ENCODE measurements at regions of chr14 and their contacts with region 1.

Region 1: DNA sequence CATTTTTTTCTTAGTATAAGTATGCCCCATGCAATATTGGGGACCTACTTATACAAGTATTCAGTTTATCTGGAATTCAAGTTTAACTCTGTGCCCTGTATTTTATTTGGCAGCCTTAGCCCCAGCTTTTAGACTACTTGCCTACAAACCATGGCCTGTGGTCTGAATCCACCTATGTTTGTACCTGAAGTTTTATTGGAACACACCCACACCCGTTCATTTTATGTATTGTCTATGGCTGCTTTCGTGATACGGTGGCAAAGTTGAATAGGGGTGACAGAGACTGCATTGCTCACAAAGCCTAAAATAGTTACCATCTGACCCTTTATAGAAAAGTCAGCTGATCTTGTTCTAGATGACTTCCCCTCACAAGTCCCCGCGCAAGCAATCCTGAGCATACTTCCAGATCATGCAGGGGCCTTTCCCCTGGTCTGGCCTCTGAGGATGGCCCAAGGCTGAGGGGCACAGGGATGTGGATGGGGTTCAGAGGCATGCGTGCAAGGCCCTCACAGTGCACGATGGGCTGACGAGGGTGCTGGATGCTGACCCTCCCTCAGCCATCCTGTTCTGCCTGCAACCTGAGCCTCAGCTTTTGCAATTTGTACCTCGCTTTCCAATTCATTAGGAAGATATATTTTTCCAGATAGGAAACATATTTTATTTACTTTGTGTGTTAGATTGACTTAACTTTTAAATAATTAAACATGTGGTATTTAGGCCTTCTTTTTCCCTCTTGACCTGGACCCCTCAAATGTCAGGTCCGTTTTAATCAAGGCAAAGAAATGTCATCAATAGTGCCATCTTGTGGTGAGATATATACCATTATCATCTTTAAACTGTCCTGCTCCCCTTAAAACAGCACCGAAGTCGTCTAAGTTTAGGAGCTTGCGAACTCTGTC is 527.3 kb upstream of the CCDC196 start:
- H3K4me3 Mint-ChIP-seq: no peak overlapping the region
- H3K27ac Mint-ChIP-seq: no peak overlapping the region
- H3K4me1 Mint-ChIP-seq: peaks cover 5% of the 10 kb centered on the region
- H3K27me3 Mint-ChIP-seq: no peaks in the 10 kb centered on the region

Region 2: GRCh38 chr14:66070509-66071319 is 111.8 kb after region 1 on chr14:
- intact Hi-C with region 1: loop called (anchors 1 kb)
- H3K4me3 Mint-ChIP-seq: no peak overlapping the region
- H3K27ac Mint-ChIP-seq: no peak overlapping the region
- H3K4me1 Mint-ChIP-seq: no peaks in the 10 kb centered on the region
- H3K27me3 Mint-ChIP-seq: peaks cover 3% of the 10 kb centered on the region

Measured in dendritic cell treated with granulocyte-macrophage colony-stimulating factor and Interleukin-4, amounts not matched to agents 40 ng/mL and 50 ng/mL, for 4 days (primary cell).